ENCODE measurements at regions of chr1 and their contacts with region 1.

Region 1: GRCh38 chr1:67060811-67061218 is 6.9 kb upstream of the SLC35D1 start:
- DNase-seq: no peak
- ATAC-seq: peak in 1 of 4 donors; percentile 71
- H3K4me3 ChIP-seq: no peak overlapping the region
- H3K27ac ChIP-seq: no peak overlapping the region
- H3K4me1 ChIP-seq: no peaks in the 10 kb centered on the region
- H3K27me3 ChIP-seq: no peaks in the 10 kb centered on the region
- CTCF ChIP-seq: no peak
- POLR2A ChIP-seq: no peak

Region 2: GRCh38 chr1:66119148-66119547 is 941.7 kb before region 1 on chr1:
- intact Hi-C with region 1: no loop called
- DNase-seq: no peak
- ATAC-seq: no peak
- H3K4me3 ChIP-seq: no peak overlapping the region
- H3K27ac ChIP-seq: no peak overlapping the region
- H3K4me1 ChIP-seq: no peaks in the 10 kb centered on the region
- H3K27me3 ChIP-seq: no peaks in the 10 kb centered on the region
- CTCF ChIP-seq: no peak
- POLR2A ChIP-seq: no peak

Region 3: GRCh38 chr1:67005068-67005467 is 55.7 kb before region 1 on chr1:
- intact Hi-C with region 1: loop called in 1 of 2 experiments (anchors 10 kb)
- DNase-seq: peak in 1 of 3 donors; percentile 56
- ATAC-seq: peak in 3 of 4 donors; percentile 38 to 58 (median 50)
- H3K4me3 ChIP-seq: no peak overlapping the region
- H3K27ac ChIP-seq: no peak overlapping the region
- H3K4me1 ChIP-seq: no peaks in the 10 kb centered on the region
- H3K27me3 ChIP-seq: no peaks in the 10 kb centered on the region
- CTCF ChIP-seq: no peak
- POLR2A ChIP-seq: no peak

Region 4: GRCh38 chr1:67144696-67145095 is 83.9 kb after region 1 on chr1:
- intact Hi-C with region 1: no loop called
- DNase-seq: no peak
- ATAC-seq: no peak
- H3K4me3 ChIP-seq: no peak overlapping the region
- H3K27ac ChIP-seq: no peak overlapping the region
- H3K4me1 ChIP-seq: peaks cover 0 to 5% (median 0%) of the 10 kb centered on the region in 4 donors
- H3K27me3 ChIP-seq: no peaks in the 10 kb centered on the region
- CTCF ChIP-seq: peak; percentile 24 to 40 (median 34)
- POLR2A ChIP-seq: no peak

Measured in right lobe of liver (tissue), 6 donors.